ENCODE measurements at regions of chr6 and their contacts with region 1.

Region 1: DNA sequence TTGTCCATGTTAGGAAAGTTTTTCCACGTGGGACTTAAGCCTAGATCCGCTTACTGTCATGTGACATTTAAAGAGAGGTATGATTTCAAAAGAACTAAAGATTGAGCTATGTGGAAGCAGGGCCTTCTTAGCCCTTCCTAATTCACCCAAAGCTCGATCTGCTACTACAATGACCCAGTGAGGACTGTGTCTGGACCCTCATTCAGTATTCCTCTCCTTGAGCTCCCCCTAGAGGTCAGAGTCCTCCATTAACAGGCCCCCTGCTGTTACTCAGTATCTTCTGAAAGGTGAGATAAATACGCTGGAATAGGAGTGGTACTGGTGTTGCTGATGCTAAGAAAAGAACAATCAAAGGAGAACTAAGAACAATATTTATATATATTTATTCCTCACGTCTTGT is 414.0 kb downstream of the GJA1 start:
- DNase-seq: peak; percentile 53
- ATAC-seq: peak; percentile 93
- H3K4me3 ChIP-seq: no peak overlapping the region
- H3K27ac ChIP-seq: no peak overlapping the region
- H3K4me1 ChIP-seq: no peaks in the 10 kb centered on the region
- H3K27me3 ChIP-seq: no peaks in the 10 kb centered on the region
- CTCF ChIP-seq: peak; percentile 75 to 87 (median 77); a peak in 5 of 6 replicates
- POLR2A ChIP-seq: no peak
- RAD21 ChIP-seq: peak; percentile 92

Region 2: DNA sequence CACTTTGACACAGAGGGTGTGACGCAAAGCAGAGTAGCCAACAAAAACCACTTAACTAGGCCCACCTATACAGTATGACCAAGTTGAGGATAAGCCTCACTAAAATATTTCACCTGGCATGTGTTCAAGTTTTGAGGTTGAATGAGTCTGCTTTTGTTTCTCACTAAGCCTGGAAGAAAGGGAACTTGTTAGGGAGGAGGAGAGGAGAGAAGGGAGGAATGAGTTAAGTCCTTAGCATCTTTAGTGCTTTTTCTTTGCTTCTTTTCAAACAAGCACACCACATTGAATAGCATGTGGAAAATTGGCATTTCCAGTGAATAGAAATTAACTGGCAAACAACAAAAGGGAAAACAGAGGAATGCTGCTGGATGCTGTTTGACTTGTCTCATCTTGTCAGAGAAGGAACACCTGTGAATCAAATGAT is 47.9 kb after region 1 on chr6:
- CTCF ChIA-PET with region 1: no interaction called
- POLR2A ChIA-PET with region 1: no interaction called
- RAD21 ChIA-PET with region 1: no interaction called
- intact Hi-C with region 1: no loop called
- DNase-seq: no peak
- ATAC-seq: no peak
- H3K4me3 ChIP-seq: no peak overlapping the region
- H3K27ac ChIP-seq: no peak overlapping the region
- H3K4me1 ChIP-seq: no peaks in the 10 kb centered on the region
- H3K27me3 ChIP-seq: no peaks in the 10 kb centered on the region
- CTCF ChIP-seq: no peak
- POLR2A ChIP-seq: no peak
- RAD21 ChIP-seq: no peak

Region 3: GRCh38 chr6:122033539-122034181 is 184.2 kb after region 1 on chr6:
- CTCF ChIA-PET with region 1: interaction called, 5 read pairs
- POLR2A ChIA-PET with region 1: no interaction called
- RAD21 ChIA-PET with region 1: no interaction called
- intact Hi-C with region 1: loop called (anchors 1 kb)
- DNase-seq: peak; percentile 49
- ATAC-seq: peak; percentile 91
- H3K4me3 ChIP-seq: no peak overlapping the region
- H3K27ac ChIP-seq: no peak overlapping the region
- H3K4me1 ChIP-seq: peaks cover 3 to 13% of the 10 kb centered on the region in 2 experiments; a peak in 3 of 4 replicates
- H3K27me3 ChIP-seq: no peaks in the 10 kb centered on the region
- CTCF ChIP-seq: peak; percentile 42 to 80 (median 60); a peak in 4 of 6 replicates
- POLR2A ChIP-seq: no peak
- RAD21 ChIP-seq: peak; percentile 89

Region 4: GRCh38 chr6:122184401-122184827 is 334.9 kb after region 1 on chr6:
- CTCF ChIA-PET with region 1: interaction called, 5 read pairs
- POLR2A ChIA-PET with region 1: no interaction called
- RAD21 ChIA-PET with region 1: no interaction called
- intact Hi-C with region 1: loop called (anchors 5 kb)
- DNase-seq: peak; percentile 19
- ATAC-seq: peak; percentile 79
- H3K4me3 ChIP-seq: no peak overlapping the region
- H3K27ac ChIP-seq: no peak overlapping the region
- H3K4me1 ChIP-seq: no peaks in the 10 kb centered on the region
- H3K27me3 ChIP-seq: no peaks in the 10 kb centered on the region
- CTCF ChIP-seq: peak; percentile 12 to 48 (median 40); a peak in 4 of 6 replicates
- POLR2A ChIP-seq: no peak
- RAD21 ChIP-seq: peak; percentile 71

Region 5: GRCh38 chr6:122365775-122366403 is 516.4 kb after region 1 on chr6:
- CTCF ChIA-PET with region 1: no interaction called
- POLR2A ChIA-PET with region 1: no interaction called
- RAD21 ChIA-PET with region 1: no interaction called
- intact Hi-C with region 1: loop called (anchors 10 kb)
- DNase-seq: no peak
- ATAC-seq: no peak
- H3K4me3 ChIP-seq: no peak overlapping the region
- H3K27ac ChIP-seq: no peak overlapping the region
- H3K4me1 ChIP-seq: no peaks in the 10 kb centered on the region
- H3K27me3 ChIP-seq: no peaks in the 10 kb centered on the region
- CTCF ChIP-seq: no peak
- POLR2A ChIP-seq: no peak
- RAD21 ChIP-seq: no peak